PC-3 (cell line): ENCODE measurements at regions of chrX and their contacts with region 1.

Region 1: DNA sequence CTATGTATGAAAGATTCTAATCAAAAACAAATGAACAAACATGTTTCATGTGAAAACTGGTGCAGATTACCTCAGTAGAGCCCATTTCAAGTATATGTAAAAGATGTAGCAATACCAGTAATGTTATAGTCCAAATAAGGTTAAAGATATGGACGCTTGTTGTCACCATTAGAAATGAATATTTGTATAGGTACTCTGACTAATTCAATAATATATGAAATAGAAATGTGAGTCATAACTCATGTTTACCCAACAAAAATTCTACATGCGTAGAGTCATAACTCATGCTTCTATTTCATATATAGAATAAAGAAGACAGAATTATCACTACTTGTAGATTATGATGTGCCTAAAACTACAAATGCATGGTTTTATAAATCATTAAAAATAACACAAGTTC is 739.1 kb upstream of the DIAPH2 start:
- DNase-seq: peak; percentile 78
- ATAC-seq: peak; percentile 72
- H3K4me3 ChIP-seq: no peak overlapping the region
- H3K27ac ChIP-seq: peak overlapping the region; percentile 52
- H3K4me1 ChIP-seq: peaks cover 33% of the 10 kb centered on the region
- H3K27me3 ChIP-seq: no peaks in the 10 kb centered on the region
- CTCF ChIP-seq: no peak

Region 2: GRCh38 chrX:95885074-95885473 is 60.5 kb before region 1 on chrX:
- CTCF ChIA-PET with region 1: no interaction called
- POLR2A ChIA-PET with region 1: no interaction called
- intact Hi-C with region 1: no loop called
- DNase-seq: peak; percentile 5
- ATAC-seq: no peak
- H3K4me3 ChIP-seq: no peak overlapping the region
- H3K27ac ChIP-seq: no peak overlapping the region
- H3K4me1 ChIP-seq: no peaks in the 10 kb centered on the region
- H3K27me3 ChIP-seq: no peaks in the 10 kb centered on the region
- CTCF ChIP-seq: no peak

Region 3: DNA sequence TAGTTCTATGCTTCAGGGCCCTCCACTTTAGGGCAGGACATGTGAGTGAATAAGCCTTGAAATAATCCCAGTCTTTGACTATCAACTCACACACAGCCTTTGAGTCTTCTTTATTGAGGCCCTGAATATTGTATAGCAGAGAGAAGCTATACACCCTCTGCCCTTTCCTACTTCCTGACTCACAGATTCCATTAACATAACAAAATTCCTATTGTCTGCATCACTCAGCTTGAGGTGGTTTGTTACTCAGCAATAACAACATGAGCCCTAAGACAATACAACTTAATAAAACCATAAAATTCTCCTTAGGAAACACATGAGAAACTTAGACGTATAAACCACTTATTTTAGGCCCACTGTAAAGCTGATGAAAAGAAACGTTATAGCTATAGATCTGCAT is 58.9 kb after region 1 on chrX:
- CTCF ChIA-PET with region 1: no interaction called
- POLR2A ChIA-PET with region 1: interaction called, 4 read pairs
- intact Hi-C with region 1: loop called (anchors 2 kb)
- DNase-seq: peak; percentile 84
- ATAC-seq: peak; percentile 90
- H3K4me3 ChIP-seq: no peak overlapping the region
- H3K27ac ChIP-seq: peak overlapping the region; percentile 75
- H3K4me1 ChIP-seq: peaks cover 37% of the 10 kb centered on the region
- H3K27me3 ChIP-seq: no peaks in the 10 kb centered on the region
- CTCF ChIP-seq: no peak